AG04449 (cell line): ENCODE measurements at regions of chr20 and their contacts with region 1.

Region 1: DNA sequence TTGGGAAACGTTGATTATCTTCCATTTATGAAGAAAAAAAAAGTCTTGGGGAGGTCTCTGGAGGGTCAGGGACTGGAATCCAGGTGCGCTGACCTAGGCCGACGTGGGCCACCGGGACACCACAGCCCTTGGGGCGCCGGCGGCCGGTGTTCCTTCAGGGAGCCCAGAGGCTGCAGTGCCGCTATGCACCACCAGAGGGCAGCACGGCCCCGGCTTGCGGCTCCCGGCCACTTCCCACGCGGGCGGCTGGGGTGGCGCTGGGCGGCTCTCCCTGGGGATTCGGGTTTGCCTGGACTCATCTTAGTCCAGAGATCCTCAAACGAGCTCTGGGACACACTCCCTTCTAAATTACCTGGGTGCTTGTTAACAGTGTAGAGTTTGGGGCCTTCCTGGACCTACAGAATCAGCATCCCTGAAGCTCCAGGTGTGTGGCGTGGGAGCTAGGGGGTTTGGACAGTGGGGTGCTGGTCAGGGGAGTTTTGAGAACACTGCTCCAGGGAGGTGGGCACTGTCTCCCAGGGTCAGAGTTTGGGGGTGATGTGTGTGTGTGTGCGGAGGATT is 23.0 kb upstream of the GTSF1L start:
- DNase-seq: no peak
- H3K4me3 ChIP-seq: no peak overlapping the region
- CTCF ChIP-seq: peak; percentile 99

Region 2: GRCh38 chr20:43728044-43728529 is 21.7 kb before region 1 on chr20:
- CTCF ChIA-PET with region 1: interaction called, 17 read pairs
- POLR2A ChIA-PET with region 1: no interaction called
- DNase-seq: no peak
- H3K4me3 ChIP-seq: no peak overlapping the region
- CTCF ChIP-seq: no peak

Region 3: GRCh38 chr20:43736588-43737158 is 13.1 kb before region 1 on chr20:
- CTCF ChIA-PET with region 1: interaction called, 17 read pairs
- POLR2A ChIA-PET with region 1: no interaction called
- DNase-seq: no peak
- H3K4me3 ChIP-seq: no peak overlapping the region
- CTCF ChIP-seq: no peak

Region 4: DNA sequence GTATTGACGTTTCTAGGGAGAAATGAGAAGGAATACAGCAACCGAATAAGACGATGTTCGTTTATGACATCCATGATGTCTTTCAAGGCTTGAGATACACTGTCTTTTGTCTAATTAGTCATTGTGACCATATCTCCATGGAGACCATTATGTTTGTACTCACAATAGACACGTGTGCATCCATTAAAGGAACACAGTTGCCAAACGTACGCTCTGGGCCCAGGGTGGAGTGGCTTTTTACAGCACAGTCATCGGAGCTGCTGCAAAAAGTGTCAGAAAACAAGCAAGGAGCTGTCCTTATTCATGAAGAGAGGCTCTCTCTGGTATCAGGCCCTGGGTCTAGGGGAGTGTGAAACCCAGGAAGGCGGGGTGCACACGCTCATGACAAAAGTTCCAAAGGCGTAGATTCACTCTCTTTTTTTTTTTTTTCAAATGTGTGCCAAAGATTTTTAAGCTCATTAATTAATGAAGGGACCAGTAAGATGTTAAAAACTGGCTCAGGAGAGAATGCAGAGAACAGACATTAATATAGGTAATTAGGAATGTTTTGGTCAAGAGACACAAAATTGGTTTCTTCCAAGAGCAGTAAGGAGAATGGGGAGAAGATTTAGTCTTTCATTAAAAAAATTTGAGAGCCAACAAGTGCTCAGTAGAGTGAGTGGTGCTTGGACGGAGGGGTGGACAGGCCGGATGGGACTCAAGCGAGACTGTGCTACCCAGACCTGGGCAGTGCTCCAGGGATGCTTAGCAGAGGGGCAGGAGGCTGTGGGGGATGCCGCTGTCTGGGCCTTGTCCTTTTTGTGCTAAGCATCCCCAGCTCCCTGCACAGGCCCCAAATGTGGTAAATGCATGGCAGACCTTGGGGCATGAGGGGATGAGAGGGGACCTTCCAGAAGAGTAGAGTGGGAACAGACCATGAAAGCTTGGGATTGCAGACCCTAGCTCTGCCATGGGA is 11.8 kb after region 1 on chr20:
- CTCF ChIA-PET with region 1: interaction called, 17 read pairs
- POLR2A ChIA-PET with region 1: interaction called, 3 read pairs
- DNase-seq: no peak
- H3K4me3 ChIP-seq: no peak overlapping the region
- CTCF ChIP-seq: no peak

Region 5: GRCh38 chr20:43844778-43845614 is 95.2 kb after region 1 on chr20:
- CTCF ChIA-PET with region 1: interaction called, 22 read pairs
- POLR2A ChIA-PET with region 1: no interaction called
- DNase-seq: peak; percentile 77
- H3K4me3 ChIP-seq: no peak overlapping the region
- CTCF ChIP-seq: peak; percentile 47

Region 6: DNA sequence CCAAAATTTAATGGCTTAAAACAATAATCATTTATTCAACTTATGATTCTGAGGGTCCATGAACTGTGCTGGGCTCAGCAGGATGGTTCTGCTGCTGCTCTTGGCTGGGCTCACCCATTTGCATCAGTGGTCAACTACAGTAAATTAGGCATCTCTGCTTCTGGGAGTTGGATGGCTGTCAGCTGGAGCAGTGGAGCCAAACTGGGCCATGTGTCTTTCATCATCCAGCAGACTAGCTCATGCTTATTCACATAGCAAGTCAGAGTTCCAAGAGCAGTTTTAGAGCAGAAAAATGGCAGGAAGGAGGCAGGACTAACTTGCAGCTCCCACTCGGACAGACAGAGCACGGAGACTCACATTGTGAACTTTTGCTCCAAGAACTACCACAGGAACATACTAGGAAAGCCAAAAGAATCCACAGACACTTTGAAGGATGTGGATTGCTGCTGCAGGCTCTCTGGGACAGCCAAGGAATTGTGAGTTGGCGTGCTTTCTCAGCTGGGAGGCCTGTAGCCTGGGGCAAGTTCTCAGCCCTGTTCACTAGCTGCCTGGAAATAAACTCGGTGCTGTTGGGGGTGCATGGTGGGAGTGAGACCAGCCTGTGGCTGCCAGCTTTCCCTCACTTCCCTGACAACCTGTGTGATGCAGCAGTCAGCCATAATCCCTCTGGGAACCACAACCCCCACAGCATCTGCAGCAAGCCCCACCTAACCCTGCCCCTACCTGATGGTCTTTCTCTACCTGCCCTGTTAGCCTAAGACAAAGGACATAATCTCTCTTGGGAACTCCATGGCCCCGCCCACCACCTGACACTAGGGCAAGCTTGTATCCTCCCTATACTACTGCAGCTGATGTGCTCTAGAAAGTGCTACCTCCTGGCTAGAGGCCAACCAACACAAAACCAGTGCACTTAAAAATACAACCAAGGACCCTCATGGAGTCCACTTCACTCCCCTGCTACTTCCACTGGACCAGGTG is 308.2 kb after region 1 on chr20:
- CTCF ChIA-PET with region 1: interaction called, 10 read pairs
- POLR2A ChIA-PET with region 1: no interaction called
- DNase-seq: no peak
- H3K4me3 ChIP-seq: no peak overlapping the region
- CTCF ChIP-seq: no peak

Region 7: DNA sequence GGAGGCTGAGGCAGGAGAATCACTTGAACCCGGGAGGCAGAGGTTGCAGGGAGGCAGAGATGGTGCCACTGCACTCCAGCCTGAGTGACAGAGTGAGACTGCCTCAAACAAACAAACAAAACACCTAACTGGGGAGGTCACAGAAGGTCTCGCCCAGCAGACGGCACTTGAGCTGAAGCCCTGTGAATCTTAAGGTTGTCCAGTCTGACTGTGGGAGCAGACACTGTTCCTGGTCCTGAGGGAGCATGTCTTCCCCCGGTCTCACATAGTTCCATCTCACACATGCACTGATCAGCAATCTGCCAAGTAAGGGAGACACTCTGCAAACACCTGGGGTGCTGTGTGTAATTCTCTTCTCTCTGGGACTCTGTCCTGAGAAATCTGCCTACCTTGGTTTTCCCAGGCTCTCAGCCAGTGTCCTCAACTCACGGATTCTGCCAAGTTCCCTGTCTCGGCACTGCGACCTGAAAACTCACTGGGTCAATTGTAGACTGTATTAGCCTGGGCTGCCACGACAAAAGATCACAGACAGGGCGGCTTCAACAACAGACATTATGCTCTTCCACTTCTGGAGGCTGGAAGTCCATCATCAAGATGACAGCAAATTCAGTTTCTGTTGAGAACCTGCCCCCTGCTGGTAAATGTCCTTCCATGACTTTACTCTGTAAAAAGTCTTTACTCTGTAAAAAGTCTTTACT is 342.9 kb after region 1 on chr20:
- CTCF ChIA-PET with region 1: interaction called, 453 read pairs
- POLR2A ChIA-PET with region 1: no interaction called
- DNase-seq: no peak
- H3K4me3 ChIP-seq: no peak overlapping the region
- CTCF ChIP-seq: peak; percentile 33